HEK293 (cell line): ENCODE measurements at regions of chr6 and their contacts with region 1.

Region 1: GRCh38 chr6:92647625-92648024 is 771.7 kb downstream of the EPHA7 start:
- H3K4me3 ChIP-seq: no peak overlapping the region
- H3K27ac ChIP-seq: no peak overlapping the region
- H3K4me1 ChIP-seq: no peaks in the 10 kb centered on the region
- CTCF ChIP-seq: no peak

Region 2: DNA sequence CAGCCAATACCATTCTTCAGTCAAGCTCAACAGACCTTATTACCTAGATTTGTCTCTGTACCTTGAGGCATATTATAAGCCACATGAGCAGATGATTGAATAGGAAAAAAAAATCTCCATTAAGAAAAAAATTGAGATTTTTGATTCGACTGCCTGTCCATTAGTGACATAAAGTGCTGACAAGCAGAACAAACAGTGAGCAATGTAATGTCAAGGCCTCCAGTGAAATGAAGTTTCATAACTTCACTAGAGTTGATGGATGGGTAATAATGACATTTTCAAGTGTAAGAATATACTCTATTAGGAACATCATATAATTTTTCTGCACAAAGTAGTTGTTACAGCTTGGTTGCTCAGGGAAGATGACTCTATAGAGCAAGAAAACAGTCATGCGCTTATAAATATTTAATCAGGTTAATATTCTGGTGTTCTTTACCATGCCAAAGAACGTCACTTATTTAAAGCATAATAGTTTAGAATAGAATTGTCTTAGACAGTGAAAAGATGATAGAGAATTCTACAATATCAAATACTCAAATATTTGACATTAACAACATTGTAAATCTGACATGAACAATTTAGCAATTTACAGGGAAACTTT is 12.0 kb before region 1 on chr6:
- CTCF ChIA-PET with region 1: interaction called, 10 read pairs
- POLR2A ChIA-PET with region 1: no interaction called
- H3K4me3 ChIP-seq: no peak overlapping the region
- H3K27ac ChIP-seq: no peak overlapping the region
- H3K4me1 ChIP-seq: no peaks in the 10 kb centered on the region
- CTCF ChIP-seq: no peak